ENCODE measurements at regions of chr4 and their contacts with region 1.

Region 1: DNA sequence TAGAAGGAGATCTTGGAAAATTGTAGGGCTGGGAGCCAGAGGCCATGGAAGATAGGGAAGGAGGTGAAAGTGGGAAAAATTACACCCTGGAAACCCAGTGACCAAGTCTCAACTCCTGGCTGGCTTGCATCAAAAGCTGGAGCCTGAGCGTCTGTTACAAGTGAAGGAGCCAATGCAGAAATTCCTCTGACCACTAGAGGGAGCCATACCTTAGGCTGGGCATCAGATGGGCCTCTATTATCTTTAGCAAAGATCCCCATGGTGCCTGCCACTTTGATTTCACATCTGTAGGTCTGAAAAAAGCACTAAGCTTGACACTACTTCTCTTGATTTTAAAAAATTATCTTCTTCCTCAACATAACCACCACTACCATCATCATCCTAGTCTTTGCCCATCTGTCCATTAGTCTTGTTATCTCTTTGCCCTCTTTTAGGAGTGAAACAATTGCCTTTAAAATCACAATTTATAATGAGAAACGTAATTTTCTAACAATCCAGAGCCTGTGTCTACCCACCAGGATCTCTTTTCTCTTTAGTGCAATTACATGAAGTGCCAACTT is 62.9 kb downstream of the ANAPC4 start:
- DNase-seq: no peak

Region 2: GRCh38 chr4:25159884-25160713 is 279.9 kb before region 1 on chr4 and contains the start of gene SEPSECS:
- intact Hi-C with region 1: no loop called
- DNase-seq: peak; percentile 98
- total RNA-seq, gene SEPSECS: 6.6 TPM

Region 3: GRCh38 chr4:25663781-25664180 is 223.8 kb after region 1 on chr4:
- intact Hi-C with region 1: no loop called
- DNase-seq: peak; percentile 62

Region 4: GRCh38 chr4:25767877-25768725 is 328.1 kb after region 1 on chr4:
- intact Hi-C with region 1: loop called (anchors 2 kb)
- DNase-seq: no peak